Activated CD8-positive, alpha-beta T cell treated with anti-CD3 and anti-CD28 coated beads for 36 hours (primary cell): ENCODE measurements at regions of chr1 and their contacts with region 1.

Region 1: DNA sequence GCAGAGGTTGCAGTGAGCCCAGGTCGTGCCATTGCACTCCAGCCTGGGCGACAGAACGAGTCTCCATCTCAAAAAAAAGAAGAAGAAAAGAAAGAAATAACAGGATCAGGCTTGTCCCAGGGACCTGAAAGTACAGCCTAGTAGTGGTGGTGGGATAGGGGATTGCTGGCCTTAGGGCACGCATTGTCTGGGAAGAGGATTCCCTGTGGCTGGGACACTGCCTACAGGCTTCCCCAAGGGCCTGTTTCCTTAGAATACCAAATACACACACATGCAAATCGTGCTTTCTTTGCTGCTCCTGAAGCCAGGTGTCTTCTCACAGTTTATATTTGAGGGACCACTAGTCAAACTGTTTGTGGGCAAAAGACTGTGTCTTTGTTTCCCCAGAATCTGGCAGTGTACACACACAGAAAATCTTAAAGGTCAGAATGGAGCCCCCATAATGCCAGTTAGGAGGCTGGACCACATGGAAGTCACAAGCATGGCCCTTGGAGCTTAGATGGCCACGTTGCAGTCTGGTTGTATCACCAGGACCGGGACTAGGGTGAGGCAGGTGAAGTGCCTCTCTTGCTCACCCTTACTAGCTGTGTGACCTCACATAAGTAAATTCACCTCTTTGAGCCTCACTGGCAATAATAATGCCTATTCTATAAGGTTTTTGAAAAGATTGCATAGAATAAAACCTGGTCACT is 12.7 kb upstream of the ASAP3 start:
- DNase-seq: no peak
- ATAC-seq: peak; percentile 13
- H3K4me3 Mint-ChIP-seq: no peak overlapping the region
- H3K27ac Mint-ChIP-seq: no peak overlapping the region
- H3K4me1 Mint-ChIP-seq: no peaks in the 10 kb centered on the region
- H3K27me3 Mint-ChIP-seq: no peaks in the 10 kb centered on the region
- CTCF ChIP-seq: no peak

Region 2: GRCh38 chr1:23403735-23404486 is 92.7 kb before region 1 on chr1:
- CTCF ChIA-PET with region 1: interaction called, 17 read pairs
- POLR2A ChIA-PET with region 1: no interaction called
- intact Hi-C with region 1: no loop called
- DNase-seq: peak; percentile 93
- ATAC-seq: peak; percentile 99
- H3K4me3 Mint-ChIP-seq: no peak overlapping the region
- H3K27ac Mint-ChIP-seq: no peak overlapping the region
- H3K4me1 Mint-ChIP-seq: peaks cover 4% of the 10 kb centered on the region
- H3K27me3 Mint-ChIP-seq: no peaks in the 10 kb centered on the region
- CTCF ChIP-seq: peak; percentile 87

Region 3: DNA sequence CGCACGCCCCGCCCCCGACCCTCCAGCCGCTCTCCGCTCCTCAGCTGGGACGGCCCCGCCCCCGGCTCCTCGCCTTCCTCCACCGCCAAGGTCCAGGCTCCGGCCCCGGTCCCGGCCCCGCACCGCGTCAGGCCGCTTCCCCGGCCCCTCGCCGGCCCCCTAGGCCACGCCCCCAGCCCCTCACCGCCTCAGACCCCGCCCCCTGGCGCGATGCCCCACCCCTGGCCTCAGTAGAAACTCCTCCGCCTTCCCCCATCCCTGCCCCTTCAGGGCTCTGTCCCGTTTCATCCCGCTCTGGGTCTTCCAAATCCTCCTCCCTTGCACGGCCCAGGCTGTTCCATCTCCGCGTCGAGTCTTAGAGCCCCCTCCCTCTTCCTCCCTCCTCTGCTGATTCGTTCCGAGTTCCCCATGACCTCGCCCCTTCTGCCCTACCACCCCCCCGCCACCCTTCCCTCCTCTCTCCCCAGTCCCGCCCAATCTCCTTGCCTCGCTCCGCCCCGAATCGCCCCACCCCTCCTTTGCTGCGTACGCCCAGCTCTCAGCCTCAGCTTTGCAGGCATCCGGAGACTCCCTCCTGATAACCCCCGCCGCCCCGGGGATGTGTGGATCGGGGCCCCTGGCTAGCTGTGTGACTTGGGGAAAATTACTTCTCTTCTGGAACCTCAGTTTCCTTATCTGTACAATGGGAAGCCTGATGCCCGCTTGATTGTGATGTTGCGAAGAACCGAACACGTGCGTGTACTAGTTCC is 12.2 kb before region 1 on chr1:
- CTCF ChIA-PET with region 1: interaction called, 64 read pairs
- POLR2A ChIA-PET with region 1: no interaction called
- intact Hi-C with region 1: no loop called
- DNase-seq: peak; percentile 93
- ATAC-seq: peak; percentile 95
- H3K4me3 Mint-ChIP-seq: peak overlapping the region; percentile 77
- H3K27ac Mint-ChIP-seq: peak overlapping the region; percentile 77
- H3K4me1 Mint-ChIP-seq: peaks cover 14% of the 10 kb centered on the region
- H3K27me3 Mint-ChIP-seq: peaks cover 20% of the 10 kb centered on the region
- CTCF ChIP-seq: no peak

Region 4: DNA sequence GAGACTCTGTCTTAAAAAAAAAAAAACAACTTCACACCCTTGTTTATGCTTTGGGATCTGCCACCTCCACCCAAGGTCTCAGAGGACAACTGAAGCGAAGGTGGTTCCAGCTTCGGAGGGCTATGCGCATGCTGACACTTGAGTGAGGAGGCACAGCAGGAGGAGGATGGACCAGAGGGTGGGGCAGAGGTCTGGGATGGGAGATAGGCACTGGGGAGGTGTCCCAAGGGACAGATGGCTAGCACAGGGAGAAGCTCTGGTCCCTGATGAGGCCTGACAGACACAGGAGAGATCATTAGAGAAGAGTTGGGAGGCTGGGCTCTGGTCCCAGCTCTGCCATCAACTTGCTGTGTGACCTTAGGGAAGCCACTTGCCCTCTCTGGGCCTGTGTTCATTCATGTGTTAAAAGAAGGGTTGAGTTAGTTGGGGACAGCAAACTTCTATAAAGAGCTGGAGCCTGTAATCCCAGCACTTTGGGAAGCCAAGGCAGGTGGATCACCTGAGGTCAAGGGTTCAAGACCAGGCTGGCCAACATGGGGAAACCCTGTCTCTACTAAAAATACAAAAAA is 17.6 kb after region 1 on chr1:
- CTCF ChIA-PET with region 1: interaction called, 202 read pairs
- POLR2A ChIA-PET with region 1: interaction called, 6 read pairs
- intact Hi-C with region 1: no loop called
- DNase-seq: no peak
- ATAC-seq: no peak
- H3K4me3 Mint-ChIP-seq: no peak overlapping the region
- H3K27ac Mint-ChIP-seq: no peak overlapping the region
- H3K4me1 Mint-ChIP-seq: no peaks in the 10 kb centered on the region
- H3K27me3 Mint-ChIP-seq: no peaks in the 10 kb centered on the region
- CTCF ChIP-seq: no peak

Region 5: DNA sequence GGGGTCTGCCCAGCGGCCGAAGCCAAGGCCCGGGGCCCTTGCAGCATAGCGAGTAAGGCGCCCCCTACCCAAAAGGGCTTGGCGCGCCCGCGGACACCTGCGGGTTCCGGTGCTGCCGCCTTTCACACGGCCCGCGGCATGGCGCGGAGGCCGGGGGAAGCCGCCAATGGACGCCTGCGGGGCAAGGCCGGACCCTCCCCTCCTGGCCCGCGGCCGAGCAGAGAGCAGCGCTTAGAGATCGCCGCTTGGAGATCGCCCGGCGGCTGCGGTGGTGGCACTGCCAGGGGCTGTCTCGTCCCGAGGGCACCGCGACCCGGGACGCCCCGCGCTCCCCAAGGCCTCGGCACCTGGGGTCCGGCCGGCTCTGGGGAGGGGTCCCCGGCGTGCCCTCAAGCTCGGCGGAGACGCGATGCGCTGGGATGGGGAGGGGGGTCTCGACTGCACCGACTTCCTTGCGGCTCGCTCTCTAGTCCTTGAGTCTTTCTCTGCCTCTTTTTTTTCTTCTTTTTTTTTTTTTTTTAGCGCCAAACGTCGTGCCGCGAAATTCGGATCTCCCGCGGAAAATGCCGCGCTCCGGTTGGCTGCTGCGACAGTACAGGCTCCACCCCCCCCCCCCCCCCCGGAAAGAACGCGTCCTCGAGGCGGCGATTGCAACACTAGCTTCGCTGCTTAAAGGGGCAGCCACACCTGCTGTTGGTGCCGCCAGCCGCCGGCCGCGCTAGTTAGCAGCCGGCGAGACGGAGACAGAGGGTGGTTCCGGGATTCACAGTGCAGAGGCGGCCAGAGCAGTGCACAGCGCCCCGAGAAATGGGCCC is 34.3 kb after region 1 on chr1 and contains the start of gene E2F2:
- CTCF ChIA-PET with region 1: interaction called, 268 read pairs
- POLR2A ChIA-PET with region 1: interaction called, 10 read pairs
- intact Hi-C with region 1: no loop called
- DNase-seq: peak; percentile 89
- ATAC-seq: peak; percentile 75
- H3K4me3 Mint-ChIP-seq: peak within 1 kb of the TSS; percentile 86
- H3K27ac Mint-ChIP-seq: peak within 1 kb of the TSS; percentile 97
- H3K4me1 Mint-ChIP-seq: peaks cover 59% of the 10 kb centered on the region
- H3K27me3 Mint-ChIP-seq: no peaks in the 10 kb centered on the region
- CTCF ChIP-seq: no peak
- total RNA-seq, gene E2F2: 23.7 to 25.3 TPM

Region 6: DNA sequence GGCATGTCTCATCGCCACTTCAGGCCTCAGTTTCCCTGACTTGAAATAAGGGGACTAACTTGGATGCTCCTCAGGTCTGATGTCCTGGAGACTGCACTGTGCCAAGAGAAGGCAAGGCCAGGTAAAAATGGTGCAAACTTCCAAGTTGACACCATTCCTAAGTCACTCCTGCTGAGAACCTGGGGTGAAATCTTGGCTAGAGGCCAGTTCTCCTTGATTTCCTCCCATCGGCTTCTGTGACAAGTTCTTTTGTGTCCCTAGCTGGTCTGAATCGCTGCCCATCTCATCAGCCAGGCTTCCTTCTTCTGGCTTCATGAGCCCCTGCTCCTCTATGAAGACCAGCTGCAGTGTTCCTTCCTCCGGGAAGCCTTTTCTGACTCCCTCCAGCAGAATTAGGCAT is 111.3 kb after region 1 on chr1:
- CTCF ChIA-PET with region 1: no interaction called
- POLR2A ChIA-PET with region 1: no interaction called
- intact Hi-C with region 1: no loop called
- DNase-seq: no peak
- ATAC-seq: no peak
- H3K4me3 Mint-ChIP-seq: no peak overlapping the region
- H3K27ac Mint-ChIP-seq: no peak overlapping the region
- H3K4me1 Mint-ChIP-seq: peaks cover 55% of the 10 kb centered on the region
- H3K27me3 Mint-ChIP-seq: no peaks in the 10 kb centered on the region
- CTCF ChIP-seq: no peak

Region 7: DNA sequence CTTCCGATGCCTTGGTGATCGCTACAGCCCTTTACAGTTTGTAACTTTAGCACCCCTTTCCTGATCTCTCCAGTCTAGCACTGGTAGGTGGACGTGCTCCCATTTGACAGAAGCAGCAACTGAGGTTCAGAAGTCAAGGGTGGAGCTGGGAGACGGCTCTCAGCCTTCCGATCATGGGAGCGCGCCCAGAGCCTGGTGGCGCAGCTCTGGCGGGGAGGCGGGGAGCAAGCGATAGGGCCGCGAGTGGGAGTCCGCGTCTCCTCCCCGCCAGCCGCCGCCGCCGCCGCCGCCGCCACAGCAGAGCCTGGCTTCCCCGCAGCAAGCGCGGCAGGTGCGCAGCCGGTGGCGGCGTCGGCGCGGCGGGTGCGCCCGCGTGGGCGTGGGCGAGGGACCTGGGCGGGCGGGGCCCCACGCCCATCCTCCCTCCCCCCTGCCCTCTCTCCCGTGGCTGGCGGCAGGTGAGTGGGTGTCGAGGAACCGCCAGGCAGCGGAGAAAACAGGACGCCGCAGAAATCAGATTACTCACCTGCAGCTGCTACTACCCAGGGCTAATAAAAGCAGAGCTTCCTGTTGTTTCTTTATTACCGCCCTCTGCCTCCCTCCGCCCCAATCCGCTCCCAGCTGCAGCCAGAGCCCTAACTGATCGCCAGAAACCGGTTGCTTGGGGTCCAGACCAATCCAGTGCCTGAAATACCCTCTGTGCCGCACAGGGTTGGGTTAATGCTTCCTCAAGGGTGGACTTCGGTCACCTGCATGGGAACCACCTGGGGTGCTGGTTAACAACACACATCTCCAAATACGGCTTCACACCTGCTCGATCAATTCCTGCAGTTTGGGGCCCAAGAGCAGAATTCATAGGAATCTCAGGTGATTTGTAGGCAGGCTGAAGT is 122.9 kb after region 1 on chr1:
- CTCF ChIA-PET with region 1: interaction called, 10 read pairs
- POLR2A ChIA-PET with region 1: no interaction called
- intact Hi-C with region 1: no loop called
- DNase-seq: peak; percentile 91
- ATAC-seq: peak; percentile 72
- H3K4me3 Mint-ChIP-seq: peak overlapping the region; percentile 68
- H3K27ac Mint-ChIP-seq: peak overlapping the region; percentile 82
- H3K4me1 Mint-ChIP-seq: peaks cover 81% of the 10 kb centered on the region
- H3K27me3 Mint-ChIP-seq: no peaks in the 10 kb centered on the region
- CTCF ChIP-seq: no peak

Region 8: GRCh38 chr1:23664837-23665795 is 168.5 kb after region 1 on chr1:
- CTCF ChIA-PET with region 1: interaction called, 23 read pairs
- POLR2A ChIA-PET with region 1: no interaction called
- intact Hi-C with region 1: no loop called
- DNase-seq: peak; percentile 54
- ATAC-seq: peak; percentile 74
- H3K4me3 Mint-ChIP-seq: no peak overlapping the region
- H3K27ac Mint-ChIP-seq: no peak overlapping the region
- H3K4me1 Mint-ChIP-seq: peaks cover 6% of the 10 kb centered on the region
- H3K27me3 Mint-ChIP-seq: no peaks in the 10 kb centered on the region
- CTCF ChIP-seq: peak; percentile 63